Breast epithelium (tissue), 4 donors: ENCODE measurements at regions of chrX and their contacts with region 1.

Region 1: DNA sequence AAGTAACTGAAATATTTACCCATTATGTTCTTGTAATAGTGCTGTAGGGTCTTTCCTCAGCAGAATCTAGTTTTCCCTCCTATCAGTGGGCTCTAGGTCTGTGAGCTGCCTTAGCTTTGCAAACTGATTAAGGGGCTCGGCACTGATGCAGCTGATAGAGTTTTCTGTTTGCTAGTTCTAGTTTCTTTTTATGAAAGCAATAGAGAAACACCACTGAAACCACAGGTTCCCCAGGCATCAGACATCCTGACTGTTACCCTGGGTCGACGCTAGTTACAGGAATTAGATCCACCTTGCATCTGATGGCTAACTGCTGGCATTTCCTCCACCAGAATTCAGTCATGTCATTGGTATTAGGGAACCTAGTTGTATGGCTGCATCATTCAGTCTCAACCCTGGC is 225.0 kb upstream of the VCX start:
- DNase-seq: no peak
- H3K4me3 ChIP-seq: no peak overlapping the region
- H3K27ac ChIP-seq: no peak overlapping the region
- H3K4me1 ChIP-seq: no peaks in the 10 kb centered on the region
- H3K27me3 ChIP-seq: peaks cover 0 to 3% of the 10 kb centered on the region in 2 donors
- CTCF ChIP-seq: no peak
- POLR2A ChIP-seq: no peak

Region 2: DNA sequence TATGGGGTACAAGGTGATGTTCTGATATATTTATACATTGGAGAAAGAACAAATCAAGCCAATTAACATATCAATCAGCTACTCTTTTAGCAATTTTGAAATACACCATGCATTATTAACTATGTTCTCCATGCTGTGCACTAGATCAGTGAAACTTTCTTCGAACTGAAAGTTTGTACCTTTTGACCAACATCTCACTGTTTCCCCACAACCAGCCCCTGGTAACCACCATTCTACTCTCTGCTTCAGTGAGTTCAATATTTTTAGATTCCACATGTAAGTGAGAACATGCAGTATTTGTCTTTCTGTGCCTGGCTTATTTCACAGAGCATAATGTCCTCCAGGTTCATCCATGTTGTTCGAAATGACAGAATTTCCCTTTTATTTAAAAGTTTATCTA is 21.2 kb before region 1 on chrX:
- intact Hi-C with region 1: loop called (anchors 2 kb)
- DNase-seq: no peak
- H3K4me3 ChIP-seq: no peak overlapping the region
- H3K27ac ChIP-seq: no peak overlapping the region
- H3K4me1 ChIP-seq: no peaks in the 10 kb centered on the region
- H3K27me3 ChIP-seq: peaks cover 0 to 3% of the 10 kb centered on the region in 2 donors
- CTCF ChIP-seq: no peak
- POLR2A ChIP-seq: no peak

Region 3: GRCh38 chrX:7720519-7720918 is 102.5 kb after region 1 on chrX:
- intact Hi-C with region 1: no loop called
- DNase-seq: no peak
- H3K4me3 ChIP-seq: no peak overlapping the region
- H3K27ac ChIP-seq: no peak overlapping the region
- H3K4me1 ChIP-seq: no peaks in the 10 kb centered on the region
- H3K27me3 ChIP-seq: no peaks in the 10 kb centered on the region
- CTCF ChIP-seq: no peak
- POLR2A ChIP-seq: no peak